Heart left ventricle (tissue), 16 donors: ENCODE measurements at regions of chr18 and their contacts with region 1.

Region 1: GRCh38 chr18:58590839-58591238 is 38.1 kb downstream of the ALPK2 start:
- DNase-seq: peak in 1 of 5 donors; percentile 50
- ATAC-seq: peak; percentile 31 to 51 (median 38)
- H3K4me3 ChIP-seq: no peak overlapping the region
- H3K27ac ChIP-seq: peak overlapping the region in 11 of 12 donors; percentile 19 to 86 (median 74)
- H3K4me1 ChIP-seq: peaks cover 6 to 60% (median 40%) of the 10 kb centered on the region in 12 donors
- H3K27me3 ChIP-seq: no peaks in the 10 kb centered on the region
- CTCF ChIP-seq: no peak
- POLR2A ChIP-seq: no peak

Region 2: GRCh38 chr18:58493516-58494253 is 97.2 kb before region 1 on chr18:
- intact Hi-C with region 1: no loop called
- DNase-seq: peak; percentile 65 to 76 (median 73)
- ATAC-seq: peak; percentile 76 to 90 (median 83)
- H3K4me3 ChIP-seq: peak overlapping the region in 6 of 12 donors; percentile 15 to 46 (median 28)
- H3K27ac ChIP-seq: peak overlapping the region in 11 of 12 donors; percentile 43 to 73 (median 61)
- H3K4me1 ChIP-seq: peaks cover 0 to 32% (median 15%) of the 10 kb centered on the region in 12 donors
- H3K27me3 ChIP-seq: peaks cover 0 to 5% (median 0%) of the 10 kb centered on the region in 9 donors
- CTCF ChIP-seq: peak; percentile 74 to 95 (median 84)
- POLR2A ChIP-seq: no peak

Region 3: GRCh38 chr18:58541789-58542425 is 48.9 kb before region 1 on chr18:
- intact Hi-C with region 1: loop called in 3 of 10 experiments (anchors 5 kb)
- DNase-seq: no peak
- ATAC-seq: peak in 2 of 4 donors; percentile 20 to 35
- H3K4me3 ChIP-seq: no peak overlapping the region
- H3K27ac ChIP-seq: peak overlapping the region in 8 of 12 donors; percentile 17 to 72 (median 44)
- H3K4me1 ChIP-seq: peaks cover 0 to 50% (median 18%) of the 10 kb centered on the region in 12 donors
- H3K27me3 ChIP-seq: no peaks in the 10 kb centered on the region
- CTCF ChIP-seq: no peak
- POLR2A ChIP-seq: no peak

Region 4: DNA sequence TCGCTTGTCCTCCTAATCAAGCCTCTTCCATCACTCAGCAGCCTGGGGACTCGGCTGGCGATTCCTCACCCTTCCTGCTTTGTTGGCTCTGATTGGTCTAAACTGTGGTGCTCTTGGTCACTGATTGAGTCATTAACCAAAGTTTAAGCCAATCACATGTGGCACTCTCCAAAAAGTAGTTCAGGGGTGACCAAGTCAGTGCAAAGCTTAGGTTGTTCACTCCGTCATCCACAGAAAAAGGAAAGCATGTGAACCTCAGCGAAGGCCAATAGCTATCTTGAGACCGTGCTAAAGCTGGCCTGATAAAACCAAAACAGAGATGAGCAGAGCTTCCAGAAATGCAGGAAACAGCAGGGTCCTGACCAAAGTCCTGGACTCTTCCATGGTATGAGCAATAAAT is 33.2 kb after region 1 on chr18:
- intact Hi-C with region 1: loop called in 1 of 10 experiments (anchors 5 kb)
- DNase-seq: peak in 3 of 5 donors; percentile 40 to 56 (median 50)
- ATAC-seq: peak; percentile 67 to 81 (median 72)
- H3K4me3 ChIP-seq: no peak overlapping the region
- H3K27ac ChIP-seq: peak overlapping the region in 11 of 12 donors; percentile 60 to 92 (median 83)
- H3K4me1 ChIP-seq: peaks cover 0 to 25% (median 7%) of the 10 kb centered on the region in 12 donors
- H3K27me3 ChIP-seq: no peaks in the 10 kb centered on the region
- CTCF ChIP-seq: no peak
- POLR2A ChIP-seq: no peak

Region 5: GRCh38 chr18:58649966-58650816 is 59.4 kb after region 1 on chr18:
- intact Hi-C with region 1: loop called in 1 of 10 experiments (anchors 10 kb)
- DNase-seq: no peak
- ATAC-seq: peak in 1 of 4 donors; percentile 39
- H3K4me3 ChIP-seq: no peak overlapping the region
- H3K27ac ChIP-seq: no peak overlapping the region
- H3K4me1 ChIP-seq: peaks cover 0 to 26% (median 0%) of the 10 kb centered on the region in 12 donors
- H3K27me3 ChIP-seq: no peaks in the 10 kb centered on the region
- CTCF ChIP-seq: no peak
- POLR2A ChIP-seq: no peak